HEK293 (cell line): ENCODE measurements at regions of chr22 and their contacts with region 1.

Region 1: DNA sequence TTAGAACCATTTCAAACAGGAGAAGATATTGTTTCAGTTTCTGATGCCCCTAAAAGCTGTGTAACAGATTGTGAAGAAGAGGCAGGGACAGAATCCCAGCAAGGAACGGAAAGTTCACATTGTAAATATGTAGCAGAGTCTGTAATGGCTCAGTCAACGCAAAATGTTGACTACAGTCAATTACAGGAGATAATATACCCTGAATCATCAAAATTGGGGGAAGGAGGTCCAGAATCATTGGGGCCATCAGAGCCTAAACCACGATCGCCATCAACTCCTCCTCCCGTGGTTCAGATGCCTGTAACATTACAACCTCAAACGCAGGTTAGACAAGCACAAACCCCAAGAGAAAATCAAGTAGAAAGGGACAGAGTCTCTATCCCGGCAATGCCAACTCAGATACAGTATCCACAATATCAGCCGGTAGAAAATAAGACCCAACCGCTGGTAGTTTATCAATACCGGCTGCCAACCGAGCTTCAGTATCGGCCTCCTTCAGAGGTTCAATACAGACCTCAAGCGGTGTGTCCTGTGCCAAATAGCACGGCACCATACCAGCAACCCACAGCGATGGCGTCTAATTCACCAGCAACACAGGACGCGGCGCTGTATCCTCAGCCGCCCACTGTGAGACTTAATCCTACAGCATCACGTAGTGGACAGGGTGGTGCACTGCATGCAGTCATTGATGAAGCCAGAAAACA is 40.8 kb downstream of the IGLL1 start:
- H3K4me3 ChIP-seq: no peak overlapping the region
- H3K27ac ChIP-seq: no peak overlapping the region
- H3K4me1 ChIP-seq: peaks cover 5% of the 10 kb centered on the region; the same call in 1 of the 2 replicates
- CTCF ChIP-seq: peak; percentile 96

Region 2: GRCh38 chr22:23385291-23386244 is 153.7 kb before region 1 on chr22:
- CTCF ChIA-PET with region 1: interaction called, 12 read pairs
- POLR2A ChIA-PET with region 1: no interaction called
- H3K4me3 ChIP-seq: no peak overlapping the region
- H3K27ac ChIP-seq: no peak overlapping the region
- H3K4me1 ChIP-seq: no peaks in the 10 kb centered on the region
- CTCF ChIP-seq: peak; percentile 98

Region 3: DNA sequence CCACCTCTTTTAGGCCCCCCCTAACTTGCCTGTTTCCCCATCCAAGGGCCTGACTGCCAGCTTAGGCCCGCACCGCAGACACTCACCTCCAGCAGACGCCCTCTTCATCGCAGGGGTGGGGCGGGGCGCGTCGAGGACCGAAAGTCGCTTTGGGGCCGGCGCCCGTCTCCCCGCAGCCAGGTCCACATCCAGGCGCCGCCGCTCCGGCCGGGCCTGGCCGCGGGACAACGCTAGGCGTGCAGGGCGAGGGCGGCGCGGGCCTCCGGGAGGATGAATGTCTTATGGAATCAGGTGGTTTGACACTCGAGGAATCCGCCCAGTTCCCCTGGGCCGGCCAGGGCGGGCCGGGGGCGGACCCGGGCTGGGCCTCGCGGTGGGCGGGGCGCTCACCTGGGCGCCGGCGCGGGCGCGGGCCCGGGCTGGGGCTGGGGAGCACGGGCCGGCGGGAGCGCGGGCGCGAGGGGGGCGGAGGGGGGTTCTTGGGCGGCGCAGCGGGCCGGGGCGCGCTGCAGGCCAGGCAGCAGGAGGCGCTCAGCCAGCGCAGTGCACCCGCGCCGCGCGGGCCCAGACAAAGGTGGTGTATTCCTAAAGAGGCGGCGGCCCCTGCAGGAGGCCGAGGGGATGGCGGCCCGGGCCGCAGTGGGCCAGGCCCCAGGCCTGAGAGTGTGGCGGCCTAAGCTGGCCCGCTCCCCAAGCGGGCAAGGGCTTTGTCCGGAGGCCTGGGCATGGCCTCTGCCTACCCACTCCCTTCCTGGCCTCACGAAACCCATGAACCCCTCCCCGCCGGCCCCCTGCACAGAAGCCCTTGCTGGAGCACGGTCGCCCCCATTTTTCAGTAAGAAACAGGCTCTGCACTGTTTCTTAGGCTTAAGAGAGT is 136.8 kb before region 1 on chr22:
- CTCF ChIA-PET with region 1: interaction called, 10 read pairs
- POLR2A ChIA-PET with region 1: no interaction called
- H3K4me3 ChIP-seq: peak overlapping the region; percentile 37
- H3K27ac ChIP-seq: peak overlapping the region; percentile 85
- H3K4me1 ChIP-seq: peaks cover 3% of the 10 kb centered on the region; the same call in 1 of the 2 replicates
- CTCF ChIP-seq: peak; percentile 72

Region 4: GRCh38 chr22:23431337-23432072 is 107.8 kb before region 1 on chr22:
- CTCF ChIA-PET with region 1: interaction called, 10 read pairs
- POLR2A ChIA-PET with region 1: no interaction called
- H3K4me3 ChIP-seq: no peak overlapping the region
- H3K27ac ChIP-seq: no peak overlapping the region
- H3K4me1 ChIP-seq: no peaks in the 10 kb centered on the region; the same call in 1 of the 2 replicates
- CTCF ChIP-seq: no peak

Region 5: GRCh38 chr22:23509571-23510305 is 29.5 kb before region 1 on chr22:
- CTCF ChIA-PET with region 1: no interaction called
- POLR2A ChIA-PET with region 1: no interaction called
- H3K4me3 ChIP-seq: no peak overlapping the region
- H3K27ac ChIP-seq: no peak overlapping the region
- H3K4me1 ChIP-seq: no peaks in the 10 kb centered on the region
- CTCF ChIP-seq: no peak

Region 6: GRCh38 chr22:23527971-23528740 is 11.1 kb before region 1 on chr22:
- CTCF ChIA-PET with region 1: interaction called, 11 read pairs
- POLR2A ChIA-PET with region 1: no interaction called
- H3K4me3 ChIP-seq: no peak overlapping the region
- H3K27ac ChIP-seq: no peak overlapping the region
- H3K4me1 ChIP-seq: no peaks in the 10 kb centered on the region
- CTCF ChIP-seq: no peak

Region 7: GRCh38 chr22:23591201-23591791 is 52.0 kb after region 1 on chr22:
- CTCF ChIA-PET with region 1: interaction called, 27 read pairs
- POLR2A ChIA-PET with region 1: no interaction called
- H3K4me3 ChIP-seq: no peak overlapping the region
- H3K27ac ChIP-seq: no peak overlapping the region
- H3K4me1 ChIP-seq: no peaks in the 10 kb centered on the region
- CTCF ChIP-seq: peak; percentile 80

Region 8: GRCh38 chr22:23803001-23803819 is 263.9 kb after region 1 on chr22:
- CTCF ChIA-PET with region 1: no interaction called
- POLR2A ChIA-PET with region 1: no interaction called
- H3K4me3 ChIP-seq: no peak overlapping the region
- H3K27ac ChIP-seq: no peak overlapping the region
- H3K4me1 ChIP-seq: no peaks in the 10 kb centered on the region
- CTCF ChIP-seq: no peak